Vagina (tissue), 2 donors: ENCODE measurements at regions of chr17 and their contacts with region 1.

Region 1: DNA sequence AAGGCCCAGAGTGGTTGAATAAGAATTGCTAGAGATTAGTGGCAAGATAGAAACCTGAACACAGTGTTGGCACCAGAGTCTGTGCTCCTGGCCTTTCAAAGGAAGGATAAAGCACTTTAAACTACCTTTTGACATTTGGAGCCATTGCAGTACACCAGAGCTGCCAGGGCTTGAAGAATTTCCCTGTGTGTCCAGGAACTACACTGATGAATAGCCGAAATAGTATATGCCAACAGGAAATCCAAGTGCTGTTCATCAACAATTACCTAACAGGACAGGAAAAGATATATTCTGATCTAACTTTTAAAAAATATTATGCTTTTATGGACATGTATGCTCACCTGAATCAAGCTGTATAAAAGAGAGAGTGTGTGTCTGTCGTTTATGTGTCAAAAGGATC is 5.1 kb downstream of the HEATR6 start:
- DNase-seq: no peak
- H3K4me3 ChIP-seq: no peak overlapping the region
- H3K27ac ChIP-seq: no peak overlapping the region
- H3K4me1 ChIP-seq: peaks cover 14% of the 10 kb centered on the region
- H3K27me3 ChIP-seq: no peaks in the 10 kb centered on the region
- CTCF ChIP-seq: no peak
- POLR2A ChIP-seq: no peak

Region 2: GRCh38 chr17:60188759-60189158 is 115.1 kb after region 1 on chr17:
- intact Hi-C with region 1: loop called (anchors 5 kb)
- DNase-seq: no peak
- H3K4me3 ChIP-seq: no peak overlapping the region
- H3K27ac ChIP-seq: no peak overlapping the region
- H3K4me1 ChIP-seq: no peaks in the 10 kb centered on the region
- H3K27me3 ChIP-seq: no peaks in the 10 kb centered on the region
- CTCF ChIP-seq: no peak
- POLR2A ChIP-seq: no peak